Activated CD4-positive, alpha-beta T cell treated with anti-CD3 and anti-CD28 coated beads for 36 hours (primary cell): ENCODE measurements at regions of chr9 and their contacts with region 1.

Region 1: GRCh38 chr9:91101611-91102168 is 260.0 kb downstream of the AUH start:
- DNase-seq: peak; percentile 96
- ATAC-seq: peak; percentile 82
- H3K4me3 Mint-ChIP-seq: peak overlapping the region; percentile 81
- H3K27ac Mint-ChIP-seq: peak overlapping the region; percentile 97
- H3K4me1 Mint-ChIP-seq: peaks cover 70% of the 10 kb centered on the region
- H3K27me3 Mint-ChIP-seq: no peaks in the 10 kb centered on the region

Region 2: GRCh38 chr9:91047993-91048607 is 53.6 kb before region 1 on chr9:
- CTCF ChIA-PET with region 1: interaction called, 3 read pairs
- POLR2A ChIA-PET with region 1: interaction called, 4 read pairs
- intact Hi-C with region 1: loop called (anchors 1 kb)
- DNase-seq: peak; percentile 75
- ATAC-seq: peak; percentile 83
- H3K4me3 Mint-ChIP-seq: peak overlapping the region; percentile 46
- H3K27ac Mint-ChIP-seq: peak overlapping the region; percentile 96
- H3K4me1 Mint-ChIP-seq: peaks cover 82% of the 10 kb centered on the region
- H3K27me3 Mint-ChIP-seq: peaks cover 23% of the 10 kb centered on the region

Region 3: DNA sequence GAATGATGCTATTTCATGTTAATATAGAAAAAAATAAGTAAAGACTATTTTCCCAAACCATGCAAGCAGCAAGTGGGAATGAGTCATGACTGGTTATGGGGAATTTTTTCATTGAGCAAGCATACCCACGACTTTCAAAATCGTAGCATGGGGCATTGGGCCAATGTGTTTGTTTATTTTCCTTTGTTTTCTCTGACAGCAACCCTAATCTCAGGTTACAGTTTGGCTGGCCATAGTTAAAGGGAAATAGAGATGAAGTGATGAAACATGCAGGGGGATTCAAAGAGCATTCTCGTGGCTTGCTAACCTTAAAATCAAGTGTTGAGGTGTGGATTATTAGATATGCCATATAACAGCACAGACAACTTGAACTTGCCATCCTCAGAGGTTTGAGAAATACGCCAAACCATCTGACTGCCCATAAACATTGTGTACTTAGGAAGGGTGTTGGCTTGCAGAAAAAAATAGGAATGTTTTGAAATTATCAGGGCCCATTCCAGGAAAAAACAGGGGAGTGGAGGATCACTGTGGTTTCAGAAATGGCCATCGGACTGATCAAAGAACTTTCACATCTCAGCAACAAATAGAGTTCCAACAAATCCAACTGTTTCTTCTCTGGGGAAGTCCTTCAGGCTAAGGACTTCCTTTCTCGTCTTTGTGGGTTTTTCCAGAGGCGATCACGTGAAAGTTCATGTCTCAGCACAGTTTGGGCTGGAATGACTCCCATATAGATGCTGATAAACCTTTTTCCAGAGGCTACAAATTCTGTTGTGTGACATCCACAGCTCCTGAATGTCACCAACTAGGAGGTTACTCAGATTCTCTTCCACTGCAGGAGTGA is 41.0 kb before region 1 on chr9:
- CTCF ChIA-PET with region 1: interaction called, 4 read pairs
- POLR2A ChIA-PET with region 1: interaction called, 11 read pairs
- intact Hi-C with region 1: no loop called
- DNase-seq: no peak
- ATAC-seq: peak; percentile 55
- H3K4me3 Mint-ChIP-seq: no peak overlapping the region
- H3K27ac Mint-ChIP-seq: peak overlapping the region; percentile 83
- H3K4me1 Mint-ChIP-seq: peaks cover 48% of the 10 kb centered on the region
- H3K27me3 Mint-ChIP-seq: no peaks in the 10 kb centered on the region

Region 4: GRCh38 chr9:91131433-91131839 is 29.7 kb after region 1 on chr9:
- CTCF ChIA-PET with region 1: interaction called, 7 read pairs
- POLR2A ChIA-PET with region 1: interaction called, 16 read pairs
- intact Hi-C with region 1: loop called (anchors 1 kb)
- DNase-seq: peak; percentile 91
- ATAC-seq: peak; percentile 98
- H3K4me3 Mint-ChIP-seq: peak overlapping the region; percentile 3
- H3K27ac Mint-ChIP-seq: peak overlapping the region; percentile 94
- H3K4me1 Mint-ChIP-seq: peaks cover 29% of the 10 kb centered on the region
- H3K27me3 Mint-ChIP-seq: no peaks in the 10 kb centered on the region

Region 5: GRCh38 chr9:91177661-91178280 is 76.1 kb after region 1 on chr9:
- CTCF ChIA-PET with region 1: interaction called, 3 read pairs
- POLR2A ChIA-PET with region 1: interaction called, 13 read pairs
- intact Hi-C with region 1: no loop called
- DNase-seq: peak; percentile 79
- ATAC-seq: peak; percentile 73
- H3K4me3 Mint-ChIP-seq: peak overlapping the region; percentile 22
- H3K27ac Mint-ChIP-seq: peak overlapping the region; percentile 99
- H3K4me1 Mint-ChIP-seq: peaks cover 64% of the 10 kb centered on the region
- H3K27me3 Mint-ChIP-seq: no peaks in the 10 kb centered on the region

Region 6: GRCh38 chr9:91346652-91347051 is 245.0 kb after region 1 on chr9:
- CTCF ChIA-PET with region 1: no interaction called
- POLR2A ChIA-PET with region 1: interaction called, 3 read pairs
- intact Hi-C with region 1: loop called in 1 of 2 experiments (anchors 2 kb)
- DNase-seq: no peak
- ATAC-seq: peak; percentile 65
- H3K4me3 Mint-ChIP-seq: no peak overlapping the region
- H3K27ac Mint-ChIP-seq: peak overlapping the region; percentile 3
- H3K4me1 Mint-ChIP-seq: peaks cover 56% of the 10 kb centered on the region
- H3K27me3 Mint-ChIP-seq: no peaks in the 10 kb centered on the region